Left colon (tissue), 2 donors: ENCODE measurements at regions of chr14 and their contacts with region 1.

Region 1: DNA sequence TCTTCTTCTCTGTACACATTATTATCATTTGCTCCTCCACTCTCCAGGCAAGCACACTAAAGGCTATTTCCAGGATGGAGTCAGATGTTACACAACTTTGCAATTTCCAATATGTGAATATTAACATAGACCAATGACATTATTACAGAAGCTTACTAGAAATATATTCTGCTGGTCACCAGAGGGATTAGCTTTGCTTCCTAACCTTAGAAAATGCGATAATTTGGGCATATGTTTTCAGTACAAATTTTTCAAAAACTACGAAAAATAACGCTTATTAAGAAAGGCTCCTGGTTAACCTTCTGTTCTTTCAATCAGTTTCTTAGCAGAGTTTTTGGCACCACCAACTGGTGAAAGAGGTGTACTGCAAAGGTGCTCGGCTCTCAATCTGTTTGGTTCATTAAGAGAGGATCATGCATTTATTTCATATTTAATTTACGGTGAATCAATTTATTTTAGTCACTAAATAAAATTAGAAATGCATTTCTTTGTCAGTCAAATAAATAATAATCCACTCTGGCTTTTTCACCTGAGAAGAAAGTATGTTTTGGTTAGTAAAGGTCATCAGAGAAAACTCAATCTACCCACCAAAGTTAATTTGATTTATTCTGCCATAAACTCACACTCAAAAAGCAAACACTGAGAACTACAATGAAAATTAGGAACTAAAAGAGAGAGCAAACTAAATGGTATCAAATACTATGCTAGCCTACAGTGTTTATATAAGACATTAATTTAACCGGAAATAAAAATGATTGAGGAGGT is 39.2 kb downstream of the EFCAB11 start:
- DNase-seq: peak in 1 of 2 donors; percentile 55
- ATAC-seq: no peak

Region 2: GRCh38 chr14:89027097-89027740 is 888.1 kb before region 1 on chr14:
- intact Hi-C with region 1: loop called (anchors 5 to 10 kb)
- DNase-seq: peak; percentile 33 to 59
- ATAC-seq: peak; percentile 92

Region 3: DNA sequence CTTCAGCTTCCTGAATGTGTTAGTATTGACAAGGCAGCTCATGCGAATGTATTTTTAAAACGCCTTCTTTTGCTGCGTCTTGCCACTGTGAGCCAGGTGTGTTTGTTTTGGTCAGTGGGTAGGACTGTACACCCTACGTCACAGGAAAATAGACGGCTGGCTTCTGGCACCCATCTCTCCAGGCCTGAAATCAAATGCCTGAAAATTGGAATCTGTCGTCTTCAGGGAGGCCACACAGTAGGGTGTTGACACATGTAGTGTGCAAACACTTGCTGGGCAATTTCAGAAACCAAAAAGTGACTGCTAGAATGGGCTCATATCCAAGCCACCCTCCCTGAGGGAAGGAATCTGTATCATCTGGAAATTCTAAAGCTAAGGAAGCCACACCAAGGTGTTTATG is 881.5 kb before region 1 on chr14:
- intact Hi-C with region 1: loop called (anchors 5 to 10 kb)
- DNase-seq: no peak
- ATAC-seq: no peak

Region 4: GRCh38 chr14:89171168-89171567 is 744.1 kb before region 1 on chr14:
- intact Hi-C with region 1: loop called in 1 of 2 experiments (anchors 5 kb)
- DNase-seq: no peak
- ATAC-seq: no peak

Region 5: GRCh38 chr14:89416002-89416995 is 499.0 kb before region 1 on chr14:
- intact Hi-C with region 1: loop called in 1 of 2 experiments (anchors 10 kb)
- DNase-seq: peak; percentile 97 to 99
- ATAC-seq: peak; percentile 80

Region 6: DNA sequence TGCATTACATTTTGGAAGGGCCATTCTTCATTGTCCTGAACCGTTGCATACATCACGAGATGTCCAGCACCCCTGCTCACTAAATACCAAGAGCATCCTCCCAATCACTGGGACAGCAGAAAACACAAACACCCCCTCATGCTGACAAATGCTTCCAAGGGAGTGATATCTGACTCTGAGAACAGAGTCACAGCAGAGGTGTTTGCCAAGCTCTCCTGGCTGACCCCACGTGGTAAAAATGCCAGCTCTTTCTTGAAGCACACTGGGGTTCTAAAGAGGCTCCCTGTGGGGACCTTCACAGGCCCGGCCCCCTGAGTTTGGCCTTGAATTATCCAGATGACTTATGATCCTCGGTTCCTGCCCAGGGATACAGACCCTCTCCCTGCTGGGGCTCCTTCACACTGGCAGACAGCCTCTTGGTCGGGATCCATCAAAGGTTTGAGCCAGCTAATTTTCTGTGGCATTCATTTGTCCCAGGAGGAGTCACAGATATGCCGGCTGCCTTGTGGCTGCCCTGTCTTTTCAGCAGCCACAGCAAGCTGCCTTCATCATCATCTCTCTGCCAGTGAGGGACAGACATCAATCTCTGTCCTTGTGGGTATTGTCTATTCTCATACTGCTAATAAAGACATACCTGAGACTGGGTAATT is 297.9 kb after region 1 on chr14:
- intact Hi-C with region 1: no loop called
- DNase-seq: no peak
- ATAC-seq: no peak

Region 7: DNA sequence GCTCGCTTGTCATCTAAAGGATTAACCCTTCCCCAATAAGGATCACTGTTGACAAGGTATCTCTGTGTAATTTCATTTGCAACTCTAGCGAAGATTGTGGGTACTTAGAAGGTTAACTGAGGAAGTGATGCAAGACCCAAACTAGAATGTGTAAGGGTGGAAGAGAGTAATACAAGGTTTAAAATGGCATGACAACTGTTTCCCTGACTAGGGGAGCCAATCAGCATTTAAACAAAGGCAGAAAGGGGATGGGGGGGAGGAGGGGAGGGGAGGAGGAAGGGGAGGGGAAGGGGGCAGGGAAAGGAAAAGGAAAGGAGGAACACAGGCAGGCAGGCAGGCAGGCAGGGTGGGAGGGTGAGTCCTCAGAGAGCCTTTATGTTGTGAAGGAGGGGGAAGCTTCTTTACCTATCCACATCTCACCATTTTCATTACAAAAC is 385.3 kb after region 1 on chr14:
- intact Hi-C with region 1: no loop called
- DNase-seq: no peak
- ATAC-seq: no peak